Dendritic cell treated with granulocyte-macrophage colony-stimulating factor and Interleukin-4, amounts not matched to agents 40 ng/mL and 50 ng/mL, for 4 days (primary cell): ENCODE measurements at regions of chr17 and their contacts with region 1.

Region 1: GRCh38 chr17:64661976-64662773 is at the start of gene SMURF2:
- H3K4me3 Mint-ChIP-seq: peak within 1 kb of the TSS; percentile 96
- H3K27ac Mint-ChIP-seq: peak within 1 kb of the TSS; percentile 93
- H3K4me1 Mint-ChIP-seq: peaks cover 32% of the 10 kb centered on the region
- H3K27me3 Mint-ChIP-seq: peaks cover 3% of the 10 kb centered on the region

Region 2: DNA sequence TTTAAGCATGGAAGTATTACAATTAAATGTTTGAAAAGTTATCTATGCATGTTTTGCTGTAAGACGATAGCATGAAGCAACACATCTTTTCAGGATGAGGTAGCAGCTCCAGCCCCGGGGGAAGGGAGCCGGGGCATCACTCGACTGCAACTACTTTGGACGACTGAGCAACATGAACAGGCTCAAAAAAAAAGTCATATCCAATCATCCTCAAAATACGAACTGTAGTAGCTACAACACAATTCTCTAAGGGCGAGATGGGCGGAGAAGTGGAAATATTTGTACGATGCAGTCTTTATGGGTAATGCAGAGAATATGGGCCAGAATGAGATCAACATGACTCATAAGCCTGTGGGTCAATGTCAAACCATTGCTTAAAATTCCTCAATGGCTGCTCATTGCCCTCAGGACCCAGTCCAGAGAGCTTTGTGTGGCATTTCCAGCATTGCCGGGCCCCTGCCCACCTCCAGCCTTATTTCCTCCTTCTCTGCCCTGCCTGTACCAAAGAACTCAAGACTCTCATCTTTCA is 17.6 kb after region 1 on chr17:
- intact Hi-C with region 1: no loop called
- H3K4me3 Mint-ChIP-seq: no peak overlapping the region
- H3K27ac Mint-ChIP-seq: no peak overlapping the region
- H3K4me1 Mint-ChIP-seq: peaks cover 8% of the 10 kb centered on the region
- H3K27me3 Mint-ChIP-seq: no peaks in the 10 kb centered on the region

Region 3: DNA sequence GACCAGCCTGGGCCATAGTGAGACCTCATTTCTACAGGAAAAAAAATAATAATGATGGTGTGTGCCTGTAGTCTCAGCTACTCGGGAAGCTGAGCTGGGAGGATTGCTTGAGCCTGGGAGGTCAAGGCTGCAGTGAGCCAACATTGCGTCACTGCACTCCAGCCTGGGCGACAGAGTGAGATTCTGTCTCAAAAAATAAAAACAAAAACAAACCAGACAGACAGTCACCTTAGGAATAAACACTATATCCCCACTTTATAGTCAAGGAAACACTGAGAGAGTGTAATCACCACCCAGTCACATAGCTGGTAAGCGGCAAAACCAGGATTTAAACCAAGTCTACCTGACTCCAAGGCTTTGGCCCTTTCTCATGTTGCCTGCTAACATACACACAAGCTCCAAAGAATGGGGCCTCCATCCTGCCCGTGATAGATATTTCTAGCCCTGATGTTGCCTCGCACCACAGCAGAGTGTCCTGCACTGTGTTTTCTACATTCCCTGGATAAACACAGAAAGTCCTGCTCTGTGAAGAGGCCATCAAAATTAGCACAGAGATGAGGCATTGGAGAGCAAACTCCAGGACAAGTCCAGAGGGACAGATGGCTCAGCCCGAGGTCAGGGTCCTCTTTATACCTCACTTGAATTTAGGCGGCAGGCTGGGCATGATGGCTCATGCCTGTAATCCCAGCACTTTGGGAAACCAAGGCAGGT is 66.0 kb after region 1 on chr17:
- intact Hi-C with region 1: loop called (anchors 5 kb)
- H3K4me3 Mint-ChIP-seq: no peak overlapping the region
- H3K27ac Mint-ChIP-seq: no peak overlapping the region
- H3K4me1 Mint-ChIP-seq: peaks cover 12% of the 10 kb centered on the region
- H3K27me3 Mint-ChIP-seq: no peaks in the 10 kb centered on the region

Region 4: GRCh38 chr17:64747938-64748540 is 85.9 kb after region 1 on chr17:
- intact Hi-C with region 1: loop called (anchors 5 kb)
- H3K4me3 Mint-ChIP-seq: no peak overlapping the region
- H3K27ac Mint-ChIP-seq: peak overlapping the region; percentile 7
- H3K4me1 Mint-ChIP-seq: no peaks in the 10 kb centered on the region
- H3K27me3 Mint-ChIP-seq: no peaks in the 10 kb centered on the region